HCT116 (cell line): ENCODE measurements at regions of chr12 and their contacts with region 1.

Region 1: DNA sequence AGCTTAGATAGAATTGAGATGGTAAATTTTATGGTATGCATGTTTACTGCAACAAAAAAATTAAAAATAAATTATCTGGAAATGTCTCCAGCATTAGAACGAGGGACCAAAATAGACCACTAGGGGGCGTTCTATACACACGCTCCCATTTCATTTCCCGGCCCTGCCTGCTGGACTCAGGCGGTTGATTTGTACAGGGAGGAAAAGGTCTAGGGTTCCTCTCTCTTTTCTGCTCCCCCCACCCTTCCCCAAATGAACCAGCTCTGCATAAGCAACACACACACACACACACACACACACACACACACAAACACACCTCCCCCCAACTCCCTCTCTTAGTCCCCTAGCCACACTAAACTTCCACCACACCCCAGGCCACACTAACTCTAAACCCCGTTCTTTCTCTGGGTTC is 7.8 kb upstream of the DTX1 start:
- DNase-seq: peak; percentile 45
- ATAC-seq: peak; percentile 89
- H3K4me3 ChIP-seq: no peak overlapping the region
- H3K27ac ChIP-seq: no peak overlapping the region
- H3K4me1 ChIP-seq: no peaks in the 10 kb centered on the region
- H3K27me3 ChIP-seq: peaks cover 6% of the 10 kb centered on the region; the same call in 1 of the 2 replicates
- CTCF ChIP-seq: peak; percentile 70 to 93 (median 81)
- POLR2A ChIP-seq: no peak
- RAD21 ChIP-seq: peak; percentile 95

Region 2: DNA sequence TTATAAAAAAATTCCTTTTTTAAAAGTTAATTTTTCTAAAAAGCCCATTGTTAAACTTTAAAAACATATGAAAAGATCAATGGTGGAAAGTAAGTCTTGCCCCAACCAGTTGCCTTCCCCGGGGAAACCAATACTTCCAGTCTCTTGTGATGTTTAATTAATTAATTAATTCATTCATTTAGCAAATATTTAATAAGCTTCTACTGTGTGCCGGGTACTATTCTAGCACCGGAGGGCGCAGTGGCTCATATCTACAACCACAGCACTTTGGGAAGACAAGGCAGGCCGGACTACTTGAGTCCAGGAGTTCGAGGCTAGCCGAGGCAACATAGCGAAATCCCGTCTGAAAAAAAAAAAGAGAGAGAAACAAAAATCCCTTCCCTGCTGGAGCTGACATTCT is 753.9 kb before region 1 on chr12:
- CTCF ChIA-PET with region 1: no interaction called
- POLR2A ChIA-PET with region 1: no interaction called
- RAD21 ChIA-PET with region 1: no interaction called
- intact Hi-C with region 1: no loop called
- DNase-seq: peak; percentile 15
- ATAC-seq: peak; percentile 62; the same call in 1 of the 2 replicates
- H3K4me3 ChIP-seq: no peak overlapping the region
- H3K27ac ChIP-seq: no peak overlapping the region
- H3K4me1 ChIP-seq: no peaks in the 10 kb centered on the region
- H3K27me3 ChIP-seq: no peaks in the 10 kb centered on the region
- CTCF ChIP-seq: peak; percentile 19 to 37 (median 23); a peak in 2 of 6 replicates
- POLR2A ChIP-seq: no peak
- RAD21 ChIP-seq: peak; percentile 52

Region 3: DNA sequence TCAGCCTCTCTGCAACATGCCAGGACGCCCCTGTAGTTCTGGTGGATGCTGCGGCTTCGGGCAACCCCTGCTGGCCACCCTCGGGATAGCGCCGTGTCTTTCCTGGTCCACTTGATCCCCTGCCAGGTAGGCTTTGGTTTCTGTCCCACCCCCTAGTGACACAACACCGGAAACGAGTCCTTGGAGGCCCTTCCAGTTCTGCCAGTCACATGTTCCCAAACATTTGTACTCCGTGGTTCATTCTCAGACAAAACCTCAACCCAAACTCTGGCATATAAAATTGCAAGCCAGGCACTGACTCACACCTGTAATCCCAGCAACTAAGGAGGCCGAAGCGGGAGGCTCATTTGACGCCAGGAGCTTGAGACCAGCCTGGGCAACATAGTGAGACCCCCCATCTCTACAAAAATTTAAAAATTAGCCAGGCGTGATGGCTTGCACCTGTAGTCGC is 49.7 kb after region 1 on chr12:
- CTCF ChIA-PET with region 1: interaction called, 5 read pairs
- POLR2A ChIA-PET with region 1: no interaction called
- RAD21 ChIA-PET with region 1: no interaction called
- intact Hi-C with region 1: loop called (anchors 1 kb)
- DNase-seq: peak; percentile 79
- ATAC-seq: peak; percentile 87
- H3K4me3 ChIP-seq: no peak overlapping the region
- H3K27ac ChIP-seq: peak overlapping the region; percentile 39
- H3K4me1 ChIP-seq: peaks cover 6 to 14% of the 10 kb centered on the region in 2 experiments; a peak in 3 of 4 replicates
- H3K27me3 ChIP-seq: no peaks in the 10 kb centered on the region
- CTCF ChIP-seq: peak; percentile 86 to 93 (median 93)
- POLR2A ChIP-seq: no peak
- RAD21 ChIP-seq: peak; percentile 84

Region 4: DNA sequence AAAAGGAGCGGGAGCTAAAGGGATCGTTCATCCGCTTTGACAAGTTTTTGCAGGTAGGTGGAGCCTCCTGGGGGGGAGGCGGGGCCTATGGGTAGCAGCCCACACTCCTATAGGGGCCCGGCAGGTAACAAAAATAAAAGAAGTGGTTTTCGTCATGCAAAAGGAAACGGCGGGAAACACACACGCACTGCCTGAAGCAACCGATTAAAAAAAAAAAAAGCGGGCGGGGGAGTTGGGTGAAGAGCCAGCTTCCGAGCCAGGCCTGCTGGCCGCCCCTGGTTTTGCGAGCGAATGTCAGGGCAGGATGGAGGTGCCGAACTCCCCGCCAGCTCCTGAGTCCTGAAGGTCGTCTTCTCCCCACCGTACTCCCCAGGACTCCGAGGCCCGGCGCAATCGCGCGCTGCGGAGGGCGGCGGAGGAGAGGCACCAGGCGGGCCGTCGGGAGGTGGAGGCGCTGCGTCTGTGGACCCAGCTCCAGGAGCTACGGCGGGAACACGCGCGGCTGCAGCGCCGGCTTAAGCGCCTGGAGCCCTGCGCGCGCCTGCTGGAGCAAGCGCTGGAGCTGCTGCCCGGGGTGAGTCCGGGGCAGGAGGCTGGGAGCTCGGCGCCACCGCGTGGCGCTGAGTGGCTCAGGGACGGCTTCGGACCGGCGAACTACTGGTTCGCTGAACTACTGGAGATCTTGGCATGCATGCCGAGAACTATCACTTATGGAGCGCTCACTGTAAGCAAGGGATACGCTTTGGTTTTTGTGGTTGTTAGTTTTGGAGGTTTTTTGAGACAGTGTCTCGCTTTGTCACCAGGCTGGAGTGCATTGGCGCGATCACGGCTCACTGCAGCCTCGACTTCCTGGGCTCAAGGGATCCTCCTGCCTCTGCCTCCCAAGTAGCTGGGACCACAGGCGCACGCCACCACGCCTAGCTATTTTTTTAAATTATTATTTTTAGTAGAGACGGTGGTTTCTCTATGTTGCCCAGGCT is 104.4 kb after region 1 on chr12:
- CTCF ChIA-PET with region 1: interaction called, 7 read pairs
- POLR2A ChIA-PET with region 1: no interaction called
- RAD21 ChIA-PET with region 1: no interaction called
- intact Hi-C with region 1: loop called (anchors 1 kb)
- DNase-seq: peak; percentile 54
- ATAC-seq: peak; percentile 82
- H3K4me3 ChIP-seq: peak overlapping the region; percentile 43 to 56
- H3K27ac ChIP-seq: peak overlapping the region; percentile 44
- H3K4me1 ChIP-seq: peaks cover 19 to 36% of the 10 kb centered on the region in 2 experiments
- H3K27me3 ChIP-seq: no peaks in the 10 kb centered on the region
- CTCF ChIP-seq: peak; percentile 41 to 83 (median 52)
- POLR2A ChIP-seq: no peak
- RAD21 ChIP-seq: peak; percentile 89

Region 5: GRCh38 chr12:113174461-113175384 is 126.0 kb after region 1 on chr12:
- CTCF ChIA-PET with region 1: interaction called, 7 read pairs
- POLR2A ChIA-PET with region 1: no interaction called
- RAD21 ChIA-PET with region 1: no interaction called
- intact Hi-C with region 1: loop called (anchors 1 kb)
- DNase-seq: no peak
- ATAC-seq: peak; percentile 91
- H3K4me3 ChIP-seq: no peak overlapping the region
- H3K27ac ChIP-seq: no peak overlapping the region
- H3K4me1 ChIP-seq: no peaks in the 10 kb centered on the region
- H3K27me3 ChIP-seq: no peaks in the 10 kb centered on the region
- CTCF ChIP-seq: peak; percentile 90 to 99 (median 94)
- POLR2A ChIP-seq: no peak
- RAD21 ChIP-seq: peak; percentile 88